Activated CD4-positive, alpha-beta memory T cell treated with anti-CD3 and anti-CD28 coated beads, Interleukin-2, amount 10 ng/mL, durations not matched to agents 7 days and 5 days (primary cell): ENCODE measurements at regions of chr9 and their contacts with region 1.

Region 1: DNA sequence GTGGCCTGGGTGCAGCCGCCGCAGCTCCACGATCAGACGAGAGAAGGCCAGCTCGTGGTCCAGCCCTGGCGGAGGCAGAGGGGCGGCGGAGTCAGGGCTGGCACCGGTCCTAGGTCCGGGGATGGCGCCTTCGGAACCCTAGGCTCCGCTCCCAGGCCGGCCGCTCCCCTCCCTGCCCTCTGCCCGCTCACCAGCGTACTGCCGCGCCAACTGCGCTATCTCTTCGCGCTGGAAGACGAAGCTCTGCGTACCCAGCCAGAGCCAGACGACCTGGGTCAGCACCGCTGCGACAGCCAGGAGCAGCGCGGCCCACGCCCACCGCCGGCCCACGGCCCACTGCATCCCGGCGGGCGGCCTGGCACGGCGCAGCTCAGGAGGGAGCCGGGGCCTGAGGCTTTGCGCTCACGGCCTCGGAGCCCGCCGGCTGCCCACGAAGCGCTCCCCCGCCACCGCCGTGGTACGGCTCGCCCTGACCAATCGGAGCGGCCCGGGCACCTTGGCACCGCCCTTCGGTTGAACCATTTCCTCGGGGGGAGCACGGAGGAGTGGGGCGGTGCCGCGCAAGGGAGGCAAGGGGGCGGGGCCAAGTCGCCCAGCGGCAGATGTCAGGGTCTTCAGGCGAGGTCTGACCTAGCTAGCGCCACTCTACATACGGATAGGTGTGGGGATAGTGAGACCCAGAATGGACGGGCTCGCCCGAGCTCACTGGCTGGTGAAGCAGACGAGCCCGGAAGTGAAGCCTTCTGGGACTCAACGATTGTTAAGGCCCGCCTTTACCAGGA is at the start of gene SIGMAR1:
- DNase-seq: peak; percentile 93
- H3K4me3 Mint-ChIP-seq: peak within 1 kb of the TSS; percentile 88
- H3K27ac Mint-ChIP-seq: peak within 1 kb of the TSS; percentile 82
- H3K4me1 Mint-ChIP-seq: peaks cover 42% of the 10 kb centered on the region
- H3K27me3 Mint-ChIP-seq: no peaks in the 10 kb centered on the region
- total RNA-seq, gene SIGMAR1: 53.3 to 55.5 TPM

Region 2: DNA sequence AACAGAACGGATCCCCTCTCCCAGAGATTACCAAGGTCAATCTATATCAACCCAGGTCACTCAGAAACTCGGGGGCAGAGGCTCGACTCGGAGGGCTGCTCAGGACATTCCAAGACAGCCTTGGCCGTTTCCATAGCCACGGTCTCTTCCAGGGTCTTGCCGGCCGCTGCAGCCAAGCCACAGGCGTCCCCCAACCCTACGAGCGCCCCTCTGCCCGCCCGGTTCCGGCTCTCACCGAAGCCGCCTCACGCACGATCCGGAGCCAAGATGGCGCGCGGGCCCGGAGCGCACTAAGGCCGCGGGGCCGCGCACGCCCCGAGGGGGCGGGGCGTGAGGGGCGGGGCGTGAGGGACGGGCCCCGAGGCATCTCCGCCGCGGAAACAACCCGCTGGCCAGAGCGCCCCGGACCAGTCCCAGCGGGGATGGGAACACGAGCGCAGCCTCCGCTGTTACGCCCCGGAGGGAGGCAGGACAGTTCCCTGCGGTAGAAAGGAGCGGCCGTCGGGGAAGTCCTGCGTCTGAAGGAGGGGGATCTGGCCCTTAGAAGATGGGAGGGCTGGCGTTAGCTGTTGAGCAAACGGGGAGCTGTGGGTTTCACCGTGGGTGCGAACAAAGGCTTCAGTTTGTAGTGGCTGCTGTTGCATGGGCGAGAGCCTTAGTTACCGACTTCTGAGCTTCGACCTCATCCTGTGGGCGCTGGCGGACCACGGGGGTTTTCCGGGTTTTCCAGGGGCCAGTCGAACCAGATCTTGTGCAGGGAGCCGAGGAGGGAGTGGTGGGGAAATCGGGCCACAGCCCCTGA is 25.5 kb before region 1 on chr9 and contains the start of gene RPP25L:
- CTCF ChIA-PET with region 1: interaction called, 125 read pairs
- POLR2A ChIA-PET with region 1: interaction called, 53 read pairs
- DNase-seq: peak; percentile 88
- H3K4me3 Mint-ChIP-seq: peak within 1 kb of the TSS; percentile 90
- H3K27ac Mint-ChIP-seq: peak within 1 kb of the TSS; percentile 85
- H3K4me1 Mint-ChIP-seq: peaks cover 22% of the 10 kb centered on the region
- H3K27me3 Mint-ChIP-seq: no peaks in the 10 kb centered on the region
- total RNA-seq, gene RPP25L: 32.4 to 32.6 TPM

Region 3: GRCh38 chr9:34651876-34652601 is 14.5 kb after region 1 on chr9 and contains the start of gene IL11RA:
- CTCF ChIA-PET with region 1: interaction called, 131 read pairs
- POLR2A ChIA-PET with region 1: interaction called, 162 read pairs
- DNase-seq: peak; percentile 55
- H3K4me3 Mint-ChIP-seq: peak within 1 kb of the TSS; percentile 8
- H3K27ac Mint-ChIP-seq: peak within 1 kb of the TSS; percentile 16
- H3K4me1 Mint-ChIP-seq: peaks cover 47% of the 10 kb centered on the region
- H3K27me3 Mint-ChIP-seq: no peaks in the 10 kb centered on the region
- total RNA-seq, gene IL11RA: 51.5 to 54.0 TPM

Region 4: DNA sequence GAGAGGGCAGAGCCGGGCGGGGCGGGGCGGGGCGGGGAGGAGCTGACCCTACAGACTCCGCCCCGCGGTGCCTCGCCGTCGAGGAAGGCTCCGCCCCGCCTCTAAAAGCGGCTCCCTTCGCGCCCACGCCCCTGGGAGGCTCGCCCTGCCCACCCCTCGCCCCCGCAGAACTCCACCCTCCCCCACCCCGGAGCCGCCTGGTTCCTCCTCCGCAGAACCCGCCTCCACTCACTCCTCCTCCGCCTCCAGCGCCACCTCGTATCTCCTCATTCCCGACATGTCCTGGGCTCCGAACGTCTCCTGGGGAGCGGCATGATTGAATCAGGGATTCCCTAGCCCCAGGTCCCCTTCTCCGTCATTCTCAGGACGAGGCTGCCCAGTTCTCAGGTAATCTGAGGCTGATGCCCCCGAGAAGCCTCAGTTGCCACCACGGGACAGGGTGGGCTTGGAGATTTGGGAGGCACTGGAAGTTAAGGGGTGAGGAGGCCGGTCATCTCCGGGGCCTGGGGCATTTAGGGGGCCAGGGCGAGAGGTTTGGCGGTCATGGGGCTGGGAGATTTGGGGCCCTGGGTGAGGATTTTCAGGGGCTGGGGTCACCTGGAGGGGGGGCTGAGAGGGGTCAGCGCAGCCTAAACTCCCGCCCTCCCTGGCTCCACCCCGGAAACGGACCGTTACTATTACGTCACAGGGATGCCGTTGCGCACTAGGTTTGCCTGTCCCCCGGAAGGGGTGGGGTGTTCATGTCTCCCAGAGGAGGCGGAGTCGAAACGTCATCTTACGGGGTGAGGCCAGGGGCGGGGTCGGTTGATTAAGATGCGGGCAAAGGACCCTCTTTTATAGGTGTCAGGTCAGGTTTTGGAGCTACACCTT is 28.1 kb after region 1 on chr9:
- CTCF ChIA-PET with region 1: interaction called, 83 read pairs
- POLR2A ChIA-PET with region 1: interaction called, 162 read pairs
- DNase-seq: peak; percentile 93
- H3K4me3 Mint-ChIP-seq: peak overlapping the region; percentile 85
- H3K27ac Mint-ChIP-seq: peak overlapping the region; percentile 80
- H3K4me1 Mint-ChIP-seq: peaks cover 50% of the 10 kb centered on the region
- H3K27me3 Mint-ChIP-seq: no peaks in the 10 kb centered on the region